WTC11 (cell line): ENCODE measurements at regions of chr7 and their contacts with region 1.

Region 1: DNA sequence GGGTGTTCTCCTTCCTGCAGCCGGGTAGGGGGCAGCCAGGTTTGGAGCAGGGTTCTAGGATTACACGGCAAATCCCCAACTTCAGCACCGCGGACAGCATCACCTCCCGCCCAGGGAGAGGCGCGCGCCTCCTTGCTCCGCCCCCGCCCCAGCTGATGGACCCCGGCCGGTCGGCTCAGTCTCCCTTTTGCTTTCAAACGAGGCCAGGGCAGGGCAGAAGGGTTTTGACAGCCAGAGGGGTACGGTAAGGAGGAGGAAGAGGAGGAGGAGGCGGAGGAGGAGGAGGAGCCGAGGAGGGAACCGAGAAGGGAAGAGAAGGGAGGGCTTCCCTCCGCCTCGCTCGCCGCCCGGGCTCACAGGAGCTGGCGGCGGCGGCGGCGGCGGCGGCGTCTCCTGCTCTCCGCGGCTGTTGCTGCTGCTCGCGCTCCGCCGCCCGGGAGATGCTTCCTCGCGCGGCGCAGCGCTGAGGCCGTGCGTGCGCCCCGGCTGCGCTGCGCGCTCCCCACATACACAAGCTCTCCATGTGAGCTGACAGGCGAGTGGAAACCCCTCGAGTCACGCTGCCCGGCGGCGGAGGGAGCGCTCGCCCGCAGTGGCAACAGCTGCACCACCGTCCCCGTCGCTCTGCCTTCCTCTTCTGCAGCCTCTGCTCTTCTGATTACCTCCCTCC is 615 bp upstream of the CNTNAP2 start:
- DNase-seq: peak; percentile 97
- ATAC-seq: peak; percentile 86
- H3K4me3 Mint-ChIP-seq: peak overlapping the region; percentile 90
- H3K27ac Mint-ChIP-seq: no peak overlapping the region
- H3K4me1 Mint-ChIP-seq: peaks cover 18% of the 10 kb centered on the region
- H3K27me3 Mint-ChIP-seq: peaks cover 32% of the 10 kb centered on the region
- CTCF ChIP-seq: no peak

Region 2: DNA sequence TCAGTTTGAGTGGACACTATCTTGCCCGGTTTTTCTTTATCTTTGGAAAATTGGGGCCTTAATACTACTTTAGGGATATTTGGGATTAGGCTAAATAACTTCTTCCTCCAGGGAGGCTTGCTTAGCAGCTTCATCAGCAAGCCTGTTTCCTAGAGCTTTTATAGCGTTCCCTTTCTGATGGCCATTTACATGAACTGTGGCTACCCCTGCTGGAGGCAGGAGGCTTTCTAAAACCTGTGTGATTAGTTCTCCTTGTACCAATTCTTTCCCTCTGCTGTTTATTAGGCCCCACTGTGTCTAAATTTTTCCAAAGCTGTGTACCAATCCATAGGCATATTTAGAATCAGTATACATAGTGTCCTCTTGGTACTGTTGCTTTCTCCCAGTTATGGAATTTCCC is 61.1 kb before region 1 on chr7:
- CTCF ChIA-PET with region 1: no interaction called
- POLR2A ChIA-PET with region 1: no interaction called
- DNase-seq: no peak
- ATAC-seq: peak; percentile 70
- H3K4me3 Mint-ChIP-seq: no peak overlapping the region
- H3K27ac Mint-ChIP-seq: no peak overlapping the region
- H3K4me1 Mint-ChIP-seq: peaks cover 11% of the 10 kb centered on the region; the same call in 1 of the 2 replicates
- H3K27me3 Mint-ChIP-seq: no peaks in the 10 kb centered on the region
- CTCF ChIP-seq: no peak

Region 3: GRCh38 chr7:146096994-146097393 is 19.0 kb before region 1 on chr7:
- CTCF ChIA-PET with region 1: interaction called, 17 read pairs
- POLR2A ChIA-PET with region 1: interaction called, 3 read pairs
- DNase-seq: peak; percentile 68
- ATAC-seq: peak; percentile 99
- H3K4me3 Mint-ChIP-seq: no peak overlapping the region
- H3K27ac Mint-ChIP-seq: no peak overlapping the region
- H3K4me1 Mint-ChIP-seq: peaks cover 2% of the 10 kb centered on the region; the same call in 1 of the 2 replicates
- H3K27me3 Mint-ChIP-seq: no peaks in the 10 kb centered on the region; the same call in 1 of the 2 replicates
- CTCF ChIP-seq: peak; percentile 26; the same call in 1 of the 2 replicates

Region 4: DNA sequence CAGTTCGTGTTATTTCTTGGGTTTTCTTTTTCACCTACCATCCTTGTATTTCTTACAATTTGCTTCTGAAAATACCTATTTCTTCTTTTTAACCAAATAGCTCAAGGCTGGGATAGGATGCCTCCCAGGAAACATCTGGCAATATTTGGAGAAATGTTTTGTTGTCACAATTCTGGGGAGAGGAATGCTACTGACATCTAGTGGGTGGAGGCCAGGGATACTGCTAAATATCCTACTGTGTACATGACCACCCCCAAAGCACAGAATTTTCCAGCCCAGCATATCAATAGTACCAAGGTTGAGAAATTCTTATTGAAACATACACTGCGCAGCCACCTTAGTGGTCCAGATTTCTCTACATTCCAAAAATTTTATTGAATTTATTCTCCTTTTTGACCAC is 56.1 kb after region 1 on chr7:
- CTCF ChIA-PET with region 1: interaction called, 10 read pairs
- POLR2A ChIA-PET with region 1: no interaction called
- DNase-seq: no peak
- ATAC-seq: peak; percentile 67
- H3K4me3 Mint-ChIP-seq: no peak overlapping the region
- H3K27ac Mint-ChIP-seq: no peak overlapping the region
- H3K4me1 Mint-ChIP-seq: peaks cover 9% of the 10 kb centered on the region
- H3K27me3 Mint-ChIP-seq: no peaks in the 10 kb centered on the region
- CTCF ChIP-seq: no peak